PC-9 (cell line): ENCODE measurements at regions of chr2 and their contacts with region 1.

Region 1: DNA sequence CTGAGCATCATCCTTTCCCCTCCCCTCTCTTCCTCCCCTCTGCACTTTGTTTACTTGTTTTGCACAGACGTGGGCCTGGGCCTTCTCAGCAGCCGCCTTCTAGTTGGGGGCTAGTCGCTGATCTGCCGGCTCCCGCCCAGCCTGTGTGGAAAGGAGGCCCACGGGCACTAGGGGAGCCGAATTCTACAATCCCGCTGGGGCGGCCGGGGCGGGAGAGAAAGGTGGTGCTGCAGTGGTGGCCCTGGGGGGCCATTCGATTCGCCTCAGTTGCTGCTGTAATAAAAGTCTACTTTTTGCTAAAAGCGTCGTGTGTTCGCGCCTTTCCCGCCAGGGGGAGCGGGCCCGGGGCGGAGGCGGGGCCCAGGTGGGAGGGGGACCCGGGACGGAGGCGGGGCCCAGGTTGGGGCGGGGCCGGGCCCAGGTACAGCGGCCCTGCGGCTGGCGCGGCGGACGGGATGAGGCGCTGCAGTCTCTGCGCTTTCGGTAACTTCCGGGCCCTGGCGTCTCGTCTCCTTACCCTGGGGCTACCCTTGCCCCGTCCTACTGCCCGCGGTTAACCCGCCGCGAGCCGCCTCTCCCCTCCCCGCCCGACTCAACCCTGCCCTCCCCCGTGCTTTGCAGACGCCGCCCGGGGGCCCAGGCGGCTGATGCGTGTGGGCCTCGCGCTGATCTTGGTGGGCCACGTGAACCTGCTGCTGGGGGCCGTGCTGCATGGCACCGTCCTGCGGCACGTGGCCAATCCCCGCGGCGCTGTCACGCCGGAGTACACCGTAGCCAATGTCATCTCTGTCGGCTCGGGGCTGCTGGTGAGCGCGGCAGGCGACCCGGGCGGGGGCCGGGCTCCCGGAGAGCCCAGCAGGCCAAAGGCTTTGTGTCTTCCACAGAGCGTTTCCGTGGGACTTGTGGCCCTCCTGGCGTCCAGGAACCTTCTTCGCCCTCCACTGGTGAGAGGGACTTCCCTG is at the start of gene KRTCAP3:
- DNase-seq: peak; percentile 69 to 86
- H3K4me3 ChIP-seq: peak within 1 kb of the TSS; percentile 79
- H3K27ac ChIP-seq: peak within 1 kb of the TSS; percentile 63
- H3K4me1 ChIP-seq: peaks cover 19% of the 10 kb centered on the region
- H3K27me3 ChIP-seq: no peaks in the 10 kb centered on the region
- CTCF ChIP-seq: peak; percentile 68
- total RNA-seq, gene KRTCAP3: 62.9 and 91.7 TPM in 2 replicates

Region 2: GRCh38 chr2:27143285-27143684 is 299.0 kb before region 1 on chr2:
- CTCF ChIA-PET with region 1: no interaction called
- POLR2A ChIA-PET with region 1: no interaction called
- intact Hi-C with region 1: no loop called
- DNase-seq: peak; percentile 13 to 63
- H3K4me3 ChIP-seq: no peak overlapping the region
- H3K27ac ChIP-seq: no peak overlapping the region
- H3K4me1 ChIP-seq: no peaks in the 10 kb centered on the region
- H3K27me3 ChIP-seq: peaks cover 13% of the 10 kb centered on the region
- CTCF ChIP-seq: no peak

Region 3: DNA sequence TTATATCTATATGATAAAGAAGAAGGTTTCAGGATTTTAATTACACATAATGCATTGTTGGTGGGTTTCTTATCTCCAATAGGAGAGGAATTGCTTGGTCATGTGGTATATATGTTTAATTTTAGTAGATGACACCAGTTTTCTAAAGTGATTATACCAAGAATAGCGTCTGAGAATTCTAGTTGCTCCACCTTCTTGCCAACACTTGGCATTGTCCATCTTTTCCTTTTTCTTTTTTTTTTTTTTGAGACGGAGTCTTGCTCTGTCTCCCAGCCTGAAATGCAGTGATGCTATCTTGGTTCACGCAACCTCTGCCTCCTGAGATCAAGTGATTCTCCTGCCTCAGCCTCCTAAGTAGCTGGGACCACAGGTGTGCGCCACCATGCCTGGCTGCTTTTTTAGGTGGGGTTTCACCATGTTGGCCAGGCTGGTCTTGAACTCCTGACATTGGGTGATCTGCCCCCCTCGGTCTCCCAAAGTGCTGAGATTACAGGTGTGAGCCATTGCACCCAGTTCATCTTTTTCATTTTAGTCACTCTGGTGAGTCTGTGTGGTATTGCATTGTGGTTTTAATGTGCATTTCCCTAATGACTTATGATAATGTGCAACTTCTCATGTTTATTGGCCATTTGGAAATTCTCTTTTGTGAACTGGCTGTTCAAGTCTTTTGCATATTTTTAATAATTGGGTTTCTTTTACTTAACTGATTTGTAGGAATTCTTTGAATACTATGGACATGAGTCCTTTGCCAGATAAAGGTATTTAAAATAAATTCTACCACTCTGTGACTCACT is 103.3 kb after region 1 on chr2:
- CTCF ChIA-PET with region 1: no interaction called
- POLR2A ChIA-PET with region 1: no interaction called
- intact Hi-C with region 1: no loop called
- DNase-seq: peak in 1 of 2 experiments; percentile 52
- H3K4me3 ChIP-seq: no peak overlapping the region
- H3K27ac ChIP-seq: no peak overlapping the region
- H3K4me1 ChIP-seq: no peaks in the 10 kb centered on the region; the same call in 1 of the 2 replicates
- H3K27me3 ChIP-seq: no peaks in the 10 kb centered on the region
- CTCF ChIP-seq: no peak

Region 4: DNA sequence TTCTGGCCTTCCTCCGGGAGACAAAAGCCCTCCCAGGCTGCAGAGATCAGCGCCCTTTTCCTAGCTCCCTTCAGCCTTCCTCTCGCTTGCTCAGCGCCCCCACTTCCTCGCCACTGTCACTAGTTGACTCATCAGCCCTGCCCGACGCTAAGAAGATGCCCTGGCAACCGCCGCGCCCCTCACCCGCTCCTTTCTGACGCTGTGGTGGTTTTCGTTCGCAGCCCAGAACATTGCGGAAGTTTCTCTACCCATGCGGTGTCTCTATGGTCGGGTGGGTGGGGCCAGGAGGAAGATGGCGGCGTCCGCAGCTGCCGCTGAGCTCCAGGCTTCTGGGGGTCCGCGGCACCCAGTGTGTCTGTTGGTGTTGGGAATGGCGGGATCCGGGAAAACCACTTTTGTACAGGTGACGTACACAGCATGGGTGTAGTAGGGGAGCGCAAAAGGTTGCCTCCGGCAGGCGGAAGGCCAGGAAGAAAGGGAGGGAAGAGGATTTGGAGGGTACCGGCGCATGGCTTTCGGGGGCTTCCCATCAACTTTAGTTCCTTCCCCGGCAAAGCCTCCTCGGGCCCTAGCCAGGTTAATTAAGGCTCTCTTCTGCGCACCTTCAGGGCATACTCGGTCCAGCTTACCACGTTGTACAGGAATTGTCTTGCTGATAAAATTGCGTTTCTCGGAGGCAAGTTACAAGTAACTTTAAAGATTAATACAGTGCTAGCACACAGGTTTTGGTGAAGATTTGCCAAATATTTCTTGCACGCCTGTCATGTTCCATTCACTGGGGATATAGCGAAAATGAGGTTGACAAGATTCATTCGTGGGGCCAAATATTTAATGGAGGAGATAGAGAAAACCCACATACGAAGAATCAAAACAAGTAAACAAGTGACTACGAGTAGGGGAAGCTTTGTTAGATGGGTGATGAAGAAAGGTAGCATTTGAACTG is 186.8 kb after region 1 on chr2 and contains the starts of genes CCDC121 and GPN1:
- CTCF ChIA-PET with region 1: interaction called, 4 read pairs
- POLR2A ChIA-PET with region 1: interaction called, 7 read pairs
- intact Hi-C with region 1: loop called (anchors 1 kb)
- DNase-seq: peak; percentile 89 to 91
- H3K4me3 ChIP-seq: peak within 1 kb of the TSS; percentile 86
- H3K27ac ChIP-seq: peak within 1 kb of the TSS; percentile 86
- H3K4me1 ChIP-seq: peaks cover 27% of the 10 kb centered on the region
- H3K27me3 ChIP-seq: no peaks in the 10 kb centered on the region
- CTCF ChIP-seq: no peak
- total RNA-seq, gene CCDC121: 1.9 and 2.9 TPM in 2 replicates
- total RNA-seq, gene GPN1: 37.3 and 45.1 TPM in 2 replicates

Region 5: GRCh38 chr2:27655155-27655951 is 213.1 kb after region 1 on chr2:
- CTCF ChIA-PET with region 1: no interaction called
- POLR2A ChIA-PET with region 1: no interaction called
- intact Hi-C with region 1: loop called (anchors 10 kb)
- DNase-seq: no peak
- H3K4me3 ChIP-seq: no peak overlapping the region
- H3K27ac ChIP-seq: no peak overlapping the region
- H3K4me1 ChIP-seq: peaks cover 10% of the 10 kb centered on the region; the same call in 1 of the 2 replicates
- H3K27me3 ChIP-seq: no peaks in the 10 kb centered on the region
- CTCF ChIP-seq: no peak

Region 6: DNA sequence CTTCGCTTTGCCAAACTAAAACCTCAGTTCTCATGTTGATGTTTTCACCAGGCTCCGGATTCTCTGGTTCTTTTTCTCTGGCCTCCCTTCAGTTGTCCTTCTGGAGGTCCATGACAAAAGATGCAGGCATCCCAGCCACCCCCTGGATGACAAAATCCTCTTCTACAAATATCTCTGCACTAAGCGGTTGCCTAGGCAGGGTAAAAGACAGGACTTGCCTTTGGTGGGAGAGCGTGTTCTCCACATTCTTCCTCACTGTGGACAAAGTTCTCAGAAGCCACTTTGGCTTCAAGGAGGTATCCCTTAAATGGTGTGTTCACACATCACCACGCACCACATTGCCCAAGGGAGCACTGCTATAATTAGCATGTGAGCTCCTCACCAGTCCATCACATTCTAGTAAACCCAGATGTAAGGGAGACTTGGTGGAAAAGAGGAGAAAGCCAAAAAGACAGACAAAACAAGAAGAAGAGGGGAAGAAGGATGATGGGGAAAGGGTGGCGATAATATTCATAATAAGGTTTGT is 305.7 kb after region 1 on chr2:
- CTCF ChIA-PET with region 1: no interaction called
- POLR2A ChIA-PET with region 1: no interaction called
- intact Hi-C with region 1: no loop called
- DNase-seq: no peak
- H3K4me3 ChIP-seq: no peak overlapping the region
- H3K27ac ChIP-seq: no peak overlapping the region
- H3K4me1 ChIP-seq: peaks cover 16% of the 10 kb centered on the region
- H3K27me3 ChIP-seq: no peaks in the 10 kb centered on the region
- CTCF ChIP-seq: no peak